Activated CD4-positive, alpha-beta T cell treated with anti-CD3 and anti-CD28 coated beads for 36 hours (primary cell): ENCODE measurements at regions of chr12 and their contacts with region 1.

Region 1: GRCh38 chr12:50055831-50056638 is 1.4 kb upstream of the ASIC1 start:
- DNase-seq: peak; percentile 79
- ATAC-seq: peak; percentile 43
- H3K4me3 Mint-ChIP-seq: peak overlapping the region; percentile 85
- H3K27ac Mint-ChIP-seq: peak overlapping the region; percentile 32
- H3K4me1 Mint-ChIP-seq: peaks cover 33% of the 10 kb centered on the region
- H3K27me3 Mint-ChIP-seq: peaks cover 39% of the 10 kb centered on the region

Region 2: GRCh38 chr12:49945394-49946080 is 110.5 kb before region 1 on chr12:
- CTCF ChIA-PET with region 1: interaction called, 17 read pairs
- POLR2A ChIA-PET with region 1: no interaction called
- intact Hi-C with region 1: no loop called
- DNase-seq: peak; percentile 94
- ATAC-seq: peak; percentile 100
- H3K4me3 Mint-ChIP-seq: peak overlapping the region; percentile 74
- H3K27ac Mint-ChIP-seq: peak overlapping the region; percentile 95
- H3K4me1 Mint-ChIP-seq: peaks cover 19% of the 10 kb centered on the region
- H3K27me3 Mint-ChIP-seq: no peaks in the 10 kb centered on the region

Region 3: DNA sequence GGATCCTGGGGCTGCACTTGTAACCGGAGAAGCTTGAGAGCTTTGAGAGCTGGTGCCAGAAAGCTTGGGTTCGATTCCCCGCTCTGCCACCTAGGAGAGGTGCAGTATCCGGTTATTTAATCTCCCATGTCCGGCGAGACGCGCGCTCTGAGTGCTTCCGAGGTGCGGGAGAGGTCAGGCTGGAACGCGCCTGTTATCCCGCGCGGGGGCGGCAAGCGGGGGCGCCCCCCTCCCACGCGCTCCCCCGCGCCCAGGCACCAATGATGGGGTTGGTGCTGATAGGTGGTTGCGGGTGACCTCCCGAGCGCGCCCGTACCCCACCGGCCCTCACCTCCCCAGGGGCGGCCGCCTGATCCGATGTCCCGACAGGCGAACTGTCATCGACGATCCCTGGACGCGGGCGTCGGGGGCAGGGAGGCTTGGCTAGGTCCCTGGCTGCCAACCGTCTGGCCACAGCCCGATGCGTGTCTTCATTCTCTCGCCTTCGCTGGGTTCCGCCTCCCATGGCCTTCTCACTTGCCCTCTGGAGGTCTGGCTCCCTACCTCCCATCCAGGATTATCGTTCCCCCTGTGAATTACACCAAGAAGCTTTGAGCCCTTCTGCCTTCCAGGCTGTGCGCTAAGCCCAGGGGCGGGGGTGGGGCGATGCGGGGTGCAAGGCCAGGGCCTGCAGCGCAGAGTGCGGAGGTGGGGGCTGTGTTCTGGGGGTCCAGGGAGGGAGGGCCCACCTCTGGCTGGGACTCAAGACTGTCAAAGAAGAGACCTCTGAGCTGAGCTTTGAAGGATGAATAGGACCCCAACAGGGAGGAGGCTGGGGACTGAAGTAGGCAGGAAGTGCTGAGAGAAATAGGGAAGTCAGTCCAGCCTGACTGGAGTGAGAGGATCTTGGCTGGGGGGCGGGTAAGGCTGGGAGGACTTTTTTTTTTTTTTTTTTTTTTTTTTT is 23.1 kb before region 1 on chr12:
- CTCF ChIA-PET with region 1: interaction called, 135 read pairs
- POLR2A ChIA-PET with region 1: no interaction called
- intact Hi-C with region 1: no loop called
- DNase-seq: no peak
- ATAC-seq: peak; percentile 23
- H3K4me3 Mint-ChIP-seq: no peak overlapping the region
- H3K27ac Mint-ChIP-seq: no peak overlapping the region
- H3K4me1 Mint-ChIP-seq: no peaks in the 10 kb centered on the region
- H3K27me3 Mint-ChIP-seq: peaks cover 16% of the 10 kb centered on the region

Region 4: DNA sequence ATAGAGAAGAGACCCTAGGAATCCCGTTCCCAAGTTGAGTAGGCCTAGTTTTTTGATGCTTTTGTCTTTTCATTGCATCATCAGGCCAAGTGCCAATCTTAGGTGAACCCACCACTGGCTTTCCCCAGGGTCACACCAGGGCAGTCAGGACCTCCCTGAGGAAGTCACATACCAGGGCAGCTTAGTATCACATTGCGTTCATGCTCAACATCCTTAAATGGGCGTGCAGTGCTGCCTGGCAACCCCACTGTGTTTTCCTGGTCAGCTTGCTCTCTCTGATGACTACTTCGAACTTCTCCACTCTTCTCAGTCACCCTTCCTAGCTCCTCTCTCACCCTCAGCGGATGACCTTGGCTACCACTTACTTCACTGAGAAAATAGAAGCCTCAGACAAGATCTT is 10.4 kb after region 1 on chr12:
- CTCF ChIA-PET with region 1: interaction called, 24 read pairs
- POLR2A ChIA-PET with region 1: no interaction called
- intact Hi-C with region 1: no loop called
- DNase-seq: no peak
- ATAC-seq: no peak
- H3K4me3 Mint-ChIP-seq: no peak overlapping the region
- H3K27ac Mint-ChIP-seq: no peak overlapping the region
- H3K4me1 Mint-ChIP-seq: peaks cover 6% of the 10 kb centered on the region
- H3K27me3 Mint-ChIP-seq: no peaks in the 10 kb centered on the region